ENCODE measurements at regions of chr6 and their contacts with region 1.

Region 1: GRCh38 chr6:27188885-27189418 is 58.5 kb upstream of the PRSS16 start:
- DNase-seq: peak; percentile 57

Region 2: GRCh38 chr6:27177485-27178406 is 11.2 kb before region 1 on chr6:
- CTCF ChIA-PET with region 1: interaction called, 14 read pairs
- POLR2A ChIA-PET with region 1: interaction called, 14 read pairs
- DNase-seq: peak; percentile 74

Region 3: DNA sequence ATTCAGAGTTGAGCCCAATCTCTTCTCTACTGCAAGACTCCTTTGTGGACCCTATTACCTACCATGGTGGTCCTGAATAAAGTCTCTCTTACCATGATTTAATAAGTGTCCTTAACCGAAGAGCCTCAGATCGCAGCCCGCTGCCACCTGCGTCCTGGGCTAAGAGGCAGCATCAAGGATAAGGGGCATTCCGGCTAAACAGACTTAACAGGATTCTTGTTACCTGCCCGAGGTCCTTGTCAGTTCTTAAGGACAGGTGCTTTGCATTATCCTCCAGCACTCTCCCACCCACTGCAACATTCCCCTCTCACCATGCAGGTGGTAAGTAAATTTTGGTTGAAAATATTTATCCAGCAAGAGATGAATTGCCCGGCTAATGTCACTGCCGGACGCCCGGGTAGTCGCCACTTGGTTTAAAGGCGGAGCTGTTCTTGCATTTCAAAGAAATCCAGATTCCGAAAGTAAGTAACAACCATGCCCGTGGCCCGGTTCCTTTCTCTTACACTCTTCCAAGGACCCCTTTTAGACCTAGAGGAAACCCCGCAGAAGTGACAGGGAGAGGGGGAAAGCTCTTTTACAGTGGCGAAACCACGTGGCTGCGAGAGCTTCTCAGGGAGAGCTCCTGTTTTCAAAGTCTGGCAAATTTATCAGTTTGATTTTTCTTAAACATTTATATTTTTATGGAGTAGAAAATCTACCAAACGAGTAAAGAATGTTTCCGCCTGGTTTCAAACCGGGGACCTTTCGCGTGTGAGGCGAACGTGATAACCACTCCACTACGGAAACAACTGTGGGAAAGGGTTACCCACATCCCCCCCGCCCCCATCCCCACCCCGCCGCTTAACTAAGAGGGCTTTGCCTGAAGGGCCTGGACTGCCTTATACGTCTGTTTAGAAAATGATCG is 16.7 kb after region 1 on chr6:
- CTCF ChIA-PET with region 1: no interaction called
- POLR2A ChIA-PET with region 1: no interaction called
- DNase-seq: no peak

Measured in HEK293T (cell line).